Posterior cingulate gyrus (tissue), 11 donors: ENCODE measurements at regions of chr20 and their contacts with region 1.

Region 1: DNA sequence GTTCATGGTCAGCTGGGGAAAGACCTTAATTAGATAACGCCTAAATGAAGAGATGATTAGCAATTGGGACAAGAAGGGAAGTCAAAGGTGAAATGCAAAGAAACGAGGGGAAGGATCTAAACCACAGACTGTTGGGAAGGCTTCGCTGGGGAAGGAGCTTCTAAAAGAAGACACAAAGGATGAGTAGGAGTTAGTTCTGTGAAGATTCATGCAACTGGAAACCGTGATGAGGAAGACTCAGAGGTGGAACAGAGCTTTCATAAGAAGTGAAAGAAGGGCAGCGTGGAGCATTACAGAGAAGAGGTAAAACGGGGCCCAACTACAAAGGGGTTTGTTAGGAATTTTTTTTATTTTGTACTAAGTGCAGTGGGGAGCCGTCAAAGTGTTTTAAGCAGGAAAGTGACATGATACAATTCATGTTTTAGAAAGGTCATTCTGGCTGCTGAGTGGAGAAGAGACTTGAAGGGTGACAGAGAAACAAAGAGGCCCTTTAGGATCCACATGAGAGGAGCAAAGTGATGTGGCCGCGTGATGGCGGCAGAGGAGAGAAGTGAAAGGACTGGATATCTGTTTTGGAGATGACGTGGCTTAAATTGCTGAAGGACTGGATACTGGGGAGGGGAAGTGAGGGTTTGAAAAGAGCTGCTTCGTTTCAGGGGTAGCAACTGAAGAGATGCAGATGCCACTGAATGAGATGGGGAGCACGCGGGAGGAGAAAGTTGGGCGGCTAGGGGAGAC is 33.6 kb downstream of the TTI1 start:
- DNase-seq: peak in 7 of 10 donors; percentile 46 to 95 (median 64)

Region 2: GRCh38 chr20:37758332-37758731 is 241.4 kb before region 1 on chr20:
- intact Hi-C with region 1: no loop called
- DNase-seq: no peak

Region 3: GRCh38 chr20:38201356-38201755 is 201.7 kb after region 1 on chr20:
- intact Hi-C with region 1: no loop called
- DNase-seq: peak in 2 of 10 donors; percentile 28 to 29

Region 4: GRCh38 chr20:38222231-38222922 is 222.7 kb after region 1 on chr20:
- intact Hi-C with region 1: loop called (anchors 2 kb)
- DNase-seq: peak in 7 of 10 donors; percentile 60 to 91 (median 75)